ENCODE measurements at regions of chr16 and their contacts with region 1.

Region 1: GRCh38 chr16:56317998-56318826 is 107.1 kb downstream of the AMFR start:
- DNase-seq: peak; percentile 74 to 82 (median 82)
- ATAC-seq: peak; percentile 97
- H3K4me3 ChIP-seq: no peak overlapping the region
- H3K4me1 ChIP-seq: peaks cover 5% of the 10 kb centered on the region
- CTCF ChIP-seq: peak; percentile 93

Region 2: GRCh38 chr16:55944377-55944802 is 373.8 kb before region 1 on chr16:
- intact Hi-C with region 1: loop called (anchors 5 kb)
- DNase-seq: peak in 2 of 3 donors; percentile 57 to 71
- ATAC-seq: peak; percentile 66
- H3K4me3 ChIP-seq: no peak overlapping the region
- H3K4me1 ChIP-seq: no peaks in the 10 kb centered on the region
- CTCF ChIP-seq: peak; percentile 73

Region 3: DNA sequence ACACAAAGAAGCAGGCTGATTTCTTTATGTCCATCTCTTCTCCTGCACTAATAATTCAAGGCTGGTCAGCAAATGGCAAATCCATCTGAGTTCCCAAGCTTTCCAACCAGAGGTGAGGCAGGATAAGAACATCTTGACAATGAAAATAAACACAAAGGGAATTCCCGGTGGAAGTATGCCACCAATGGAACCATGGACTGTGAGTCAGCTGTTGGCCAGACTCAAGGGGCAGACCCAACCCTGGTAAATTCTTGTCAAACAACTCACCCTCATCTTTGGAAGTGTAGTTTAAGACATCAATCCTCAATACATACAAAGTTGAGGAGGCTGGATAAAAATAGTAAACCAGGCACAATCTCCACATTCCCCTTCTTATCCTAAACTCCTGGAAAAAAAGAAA is 368.7 kb before region 1 on chr16:
- intact Hi-C with region 1: loop called (anchors 5 kb)
- DNase-seq: no peak
- ATAC-seq: no peak
- H3K4me3 ChIP-seq: no peak overlapping the region
- H3K4me1 ChIP-seq: no peaks in the 10 kb centered on the region
- CTCF ChIP-seq: no peak

Region 4: GRCh38 chr16:56174411-56174810 is 143.8 kb before region 1 on chr16:
- intact Hi-C with region 1: no loop called
- DNase-seq: no peak
- ATAC-seq: no peak
- H3K4me3 ChIP-seq: no peak overlapping the region
- H3K4me1 ChIP-seq: no peaks in the 10 kb centered on the region
- CTCF ChIP-seq: no peak